GM12878 (cell line): ENCODE measurements at regions of chr6 and their contacts with region 1.

Region 1: GRCh38 chr6:11064836-11065235 is 20.7 kb upstream of the ELOVL2 start:
- DNase-seq: no peak
- ATAC-seq: no peak
- H3K4me3 ChIP-seq: no peak overlapping the region
- H3K27ac ChIP-seq: no peak overlapping the region
- H3K4me1 ChIP-seq: no peaks in the 10 kb centered on the region
- H3K27me3 ChIP-seq: no peaks in the 10 kb centered on the region
- CTCF ChIP-seq: no peak
- EP300 ChIP-seq: no peak
- POLR2A ChIP-seq: no peak
- RAD21 ChIP-seq: no peak

Region 2: GRCh38 chr6:10478187-10479040 is 586.4 kb before region 1 on chr6:
- CTCF ChIA-PET with region 1: interaction called, 29 read pairs
- POLR2A ChIA-PET with region 1: no interaction called
- RAD21 ChIA-PET with region 1: interaction called, 14 read pairs
- SMC1A ChIA-PET with region 1: interaction called, 6 read pairs
- in situ Hi-C with region 1: loop called (anchors 10 kb)
- intact Hi-C with region 1: loop called (anchors 5 kb)
- DNase-seq: no peak
- ATAC-seq: peak; percentile 87
- H3K4me3 ChIP-seq: no peak overlapping the region
- H3K27ac ChIP-seq: no peak overlapping the region
- H3K4me1 ChIP-seq: no peaks in the 10 kb centered on the region
- H3K27me3 ChIP-seq: no peaks in the 10 kb centered on the region; a peak in 2 of 4 replicates
- CTCF ChIP-seq: peak; percentile 55 to 65 (median 62); a peak in 5 of 6 replicates
- EP300 ChIP-seq: no peak
- POLR2A ChIP-seq: no peak
- RAD21 ChIP-seq: peak; percentile 81

Region 3: GRCh38 chr6:10847684-10848083 is 217.2 kb before region 1 on chr6:
- CTCF ChIA-PET with region 1: interaction called, 20 read pairs
- POLR2A ChIA-PET with region 1: no interaction called
- RAD21 ChIA-PET with region 1: interaction called, 3 read pairs
- SMC1A ChIA-PET with region 1: interaction called, 4 read pairs
- in situ Hi-C with region 1: no loop called
- intact Hi-C with region 1: loop called (anchors 1 kb)
- DNase-seq: no peak
- ATAC-seq: no peak
- H3K4me3 ChIP-seq: no peak overlapping the region
- H3K27ac ChIP-seq: no peak overlapping the region
- H3K4me1 ChIP-seq: no peaks in the 10 kb centered on the region
- H3K27me3 ChIP-seq: no peaks in the 10 kb centered on the region
- CTCF ChIP-seq: no peak; a peak in 1 of 6 replicates
- EP300 ChIP-seq: no peak
- POLR2A ChIP-seq: no peak
- RAD21 ChIP-seq: 0 out of 2 replicates have a peak, but pooled peaks have one; percentile 13

Region 4: DNA sequence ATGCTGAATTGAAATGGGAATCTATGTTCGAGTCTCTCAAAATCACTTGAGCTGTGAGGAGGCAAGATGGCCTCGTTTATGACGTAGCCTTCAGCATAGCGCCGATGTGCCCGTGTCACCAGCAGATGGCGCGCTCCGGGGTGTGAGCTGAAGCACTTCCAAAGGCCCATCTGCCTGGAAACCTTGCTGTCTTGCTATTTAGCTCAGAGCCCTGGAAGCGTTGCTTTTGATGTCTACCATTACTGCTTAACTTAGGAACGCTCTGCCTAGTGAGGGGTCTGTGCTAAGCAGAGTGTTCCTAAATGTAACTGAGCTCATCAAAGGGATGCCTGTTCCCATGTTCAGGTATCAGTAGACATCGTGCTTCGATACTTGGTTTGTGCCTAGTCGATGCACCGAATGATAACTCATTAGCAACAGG is 110.2 kb before region 1 on chr6:
- CTCF ChIA-PET with region 1: interaction called, 114 read pairs
- POLR2A ChIA-PET with region 1: no interaction called
- RAD21 ChIA-PET with region 1: interaction called, 50 read pairs
- SMC1A ChIA-PET with region 1: interaction called, 85 read pairs
- in situ Hi-C with region 1: loop called (anchors 5 kb)
- intact Hi-C with region 1: loop called (anchors 1 kb)
- DNase-seq: peak; percentile 31
- ATAC-seq: peak; percentile 99
- H3K4me3 ChIP-seq: no peak overlapping the region
- H3K27ac ChIP-seq: no peak overlapping the region
- H3K4me1 ChIP-seq: no peaks in the 10 kb centered on the region
- H3K27me3 ChIP-seq: no peaks in the 10 kb centered on the region
- CTCF ChIP-seq: peak; percentile 89 to 97 (median 92)
- EP300 ChIP-seq: no peak
- POLR2A ChIP-seq: no peak
- RAD21 ChIP-seq: peak; percentile 70

Region 5: GRCh38 chr6:10962673-10963072 is 102.2 kb before region 1 on chr6:
- CTCF ChIA-PET with region 1: interaction called, 14 read pairs
- POLR2A ChIA-PET with region 1: no interaction called
- RAD21 ChIA-PET with region 1: interaction called, 4 read pairs
- SMC1A ChIA-PET with region 1: interaction called, 4 read pairs
- in situ Hi-C with region 1: loop called (anchors 5 kb)
- intact Hi-C with region 1: no loop called
- DNase-seq: no peak
- ATAC-seq: peak; percentile 77
- H3K4me3 ChIP-seq: no peak overlapping the region
- H3K27ac ChIP-seq: no peak overlapping the region
- H3K4me1 ChIP-seq: peaks cover 4% of the 10 kb centered on the region
- H3K27me3 ChIP-seq: no peaks in the 10 kb centered on the region
- CTCF ChIP-seq: no peak
- EP300 ChIP-seq: no peak
- POLR2A ChIP-seq: no peak
- RAD21 ChIP-seq: no peak

Region 6: DNA sequence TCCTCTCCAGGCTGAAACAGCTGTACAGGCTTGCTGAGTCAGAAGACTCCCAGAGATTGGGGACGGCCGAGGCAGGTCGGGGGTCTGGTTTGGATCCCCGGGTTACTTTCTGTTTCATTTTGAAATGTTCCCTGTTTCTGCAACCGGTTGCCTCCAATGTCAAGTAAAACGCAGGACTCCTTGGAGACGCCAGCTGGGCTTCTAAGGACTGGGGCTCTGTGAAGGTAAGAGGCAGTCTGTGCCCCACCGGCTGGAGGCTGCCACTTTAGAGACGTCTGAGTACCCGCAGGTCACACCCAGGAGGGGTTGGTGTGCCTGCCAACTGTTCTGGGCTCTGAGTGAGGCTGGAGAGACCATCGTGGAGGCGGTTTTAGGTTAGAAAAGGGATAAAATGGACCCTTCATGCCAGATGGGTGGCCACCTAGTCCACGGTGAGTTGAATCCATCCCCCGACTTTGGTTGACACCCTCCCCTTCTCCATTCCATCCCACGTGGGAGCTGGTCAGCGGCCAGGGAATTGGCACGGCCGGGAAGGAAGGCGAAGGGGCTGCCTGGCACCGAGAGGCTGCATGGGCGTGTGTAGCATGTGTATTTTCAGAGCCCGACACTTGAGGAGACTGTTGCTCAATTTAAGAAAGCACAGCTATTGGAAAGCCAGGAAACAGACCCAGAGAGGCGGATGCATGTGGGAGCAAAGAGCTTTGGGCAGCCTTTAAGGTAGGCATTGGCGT is 1892.7 kb after region 1 on chr6:
- CTCF ChIA-PET with region 1: no interaction called
- POLR2A ChIA-PET with region 1: no interaction called
- RAD21 ChIA-PET with region 1: no interaction called
- SMC1A ChIA-PET with region 1: no interaction called
- in situ Hi-C with region 1: no loop called
- intact Hi-C with region 1: no loop called
- DNase-seq: no peak
- ATAC-seq: peak; percentile 68
- H3K4me3 ChIP-seq: peak overlapping the region; percentile 68
- H3K27ac ChIP-seq: no peak overlapping the region
- H3K4me1 ChIP-seq: no peaks in the 10 kb centered on the region
- H3K27me3 ChIP-seq: peaks cover 2 to 23% of the 10 kb centered on the region in 2 experiments; a peak in 3 of 4 replicates
- CTCF ChIP-seq: peak in 1 of 3 experiments; percentile 8; a peak in 1 of 6 replicates
- EP300 ChIP-seq: no peak
- POLR2A ChIP-seq: no peak
- RAD21 ChIP-seq: 0 out of 2 replicates have a peak, but pooled peaks have one; percentile 13